ENCODE measurements at regions of chr4 and their contacts with region 1.

Region 1: GRCh38 chr4:108620101-108620932 is at the start of gene RPL34:
- DNase-seq: peak; percentile 95 to 97
- ATAC-seq: peak; percentile 99
- H3K4me3 ChIP-seq: peak within 1 kb of the TSS; percentile 75 to 87 (median 79)
- H3K27ac ChIP-seq: peak within 1 kb of the TSS; percentile 78 to 87 (median 83)
- H3K4me1 ChIP-seq: peaks cover 19 to 21% of the 10 kb centered on the region in 2 donors
- H3K27me3 ChIP-seq: no peaks in the 10 kb centered on the region
- CTCF ChIP-seq: no peak
- POLR2A ChIP-seq: peak; percentile 93 to 94
- total RNA-seq, gene RPL34: 419 to 608 (median 540) TPM

Region 2: DNA sequence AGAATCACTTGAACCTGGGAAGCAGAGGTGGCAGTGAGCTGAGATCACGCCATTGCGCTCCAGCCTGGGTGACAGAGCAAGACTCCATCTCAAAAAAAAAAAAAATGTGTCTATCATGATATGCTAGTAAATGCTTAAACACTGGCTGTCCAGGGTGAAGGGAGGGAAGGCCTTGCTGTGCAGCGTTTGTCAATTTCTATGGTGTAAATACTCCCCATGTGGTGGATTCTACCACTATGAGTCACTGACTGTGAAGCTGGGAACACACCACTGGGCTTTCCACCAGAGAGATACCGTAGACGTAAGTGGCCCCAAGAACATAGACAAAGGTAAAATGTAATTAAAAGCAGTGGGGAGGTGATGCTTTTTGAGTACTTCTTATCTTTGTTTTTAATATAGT is 400.3 kb before region 1 on chr4:
- in situ Hi-C with region 1: no loop called
- intact Hi-C with region 1: no loop called
- DNase-seq: no peak
- ATAC-seq: no peak
- H3K4me3 ChIP-seq: no peak overlapping the region
- H3K27ac ChIP-seq: no peak overlapping the region
- H3K4me1 ChIP-seq: no peaks in the 10 kb centered on the region
- H3K27me3 ChIP-seq: no peaks in the 10 kb centered on the region
- CTCF ChIP-seq: no peak
- POLR2A ChIP-seq: no peak

Region 3: DNA sequence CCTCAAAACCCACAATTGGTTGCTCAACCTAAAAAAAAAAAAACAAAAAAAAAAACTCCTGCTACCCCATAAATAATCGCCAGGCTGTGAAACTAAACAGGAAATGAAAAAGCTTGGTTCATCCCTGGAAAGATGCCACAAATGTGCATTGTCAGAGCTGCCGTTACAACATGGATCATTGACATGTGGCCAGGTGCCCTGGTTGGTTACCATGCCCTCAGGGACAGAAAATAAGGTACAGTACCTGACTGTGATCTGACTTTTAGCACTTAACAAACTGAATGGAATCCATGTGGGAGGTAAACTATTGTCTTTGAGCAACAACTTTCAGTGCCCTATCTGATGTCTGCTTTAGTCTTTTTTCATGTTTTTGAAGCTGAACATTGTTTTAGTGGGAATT is 118.0 kb before region 1 on chr4:
- in situ Hi-C with region 1: no loop called
- intact Hi-C with region 1: no loop called
- DNase-seq: no peak
- ATAC-seq: no peak
- H3K4me3 ChIP-seq: no peak overlapping the region
- H3K27ac ChIP-seq: no peak overlapping the region
- H3K4me1 ChIP-seq: no peaks in the 10 kb centered on the region
- H3K27me3 ChIP-seq: no peaks in the 10 kb centered on the region
- CTCF ChIP-seq: no peak
- POLR2A ChIP-seq: no peak

Region 4: DNA sequence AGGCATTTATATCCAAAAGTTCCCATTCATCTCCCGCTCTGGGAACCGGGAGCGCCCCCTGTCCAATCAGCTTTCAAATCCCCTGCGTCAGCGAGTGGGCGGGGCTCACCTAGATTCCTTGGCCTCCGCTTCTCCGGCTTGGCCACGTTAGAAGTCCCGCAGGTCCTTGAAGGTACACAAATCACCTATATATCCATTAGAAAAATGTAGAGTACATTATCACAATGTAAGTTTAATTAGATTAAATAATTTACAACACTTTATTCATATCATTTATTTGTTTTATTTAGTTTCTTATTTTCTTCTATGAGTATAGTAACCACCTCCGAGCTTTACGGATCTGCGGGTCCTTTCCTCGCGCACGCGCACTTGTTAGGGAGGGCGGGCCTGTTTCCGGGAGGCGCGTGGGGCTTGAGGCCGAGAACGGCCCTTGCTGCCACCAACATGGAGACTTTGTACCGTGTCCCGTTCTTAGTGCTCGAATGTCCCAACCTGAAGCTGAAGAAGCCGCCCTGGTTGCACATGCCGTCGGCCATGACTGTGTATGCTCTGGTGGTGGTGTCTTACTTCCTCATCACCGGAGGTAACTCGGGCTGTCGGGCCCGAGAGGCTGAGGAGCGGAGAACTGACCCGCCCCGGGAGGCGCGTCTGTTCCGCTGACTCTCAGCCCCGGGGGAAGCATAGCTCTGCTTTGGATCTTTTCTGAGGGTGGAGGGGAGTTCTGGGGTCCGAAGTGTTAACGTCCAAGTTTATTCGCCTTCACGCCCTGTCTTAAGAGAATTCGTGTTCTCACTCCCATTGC is 30.1 kb after region 1 on chr4 and contains the start of gene OSTC:
- in situ Hi-C with region 1: no loop called
- intact Hi-C with region 1: loop called (anchors 1 kb)
- DNase-seq: peak; percentile 87 to 91
- ATAC-seq: peak; percentile 99
- H3K4me3 ChIP-seq: peak within 1 kb of the TSS; percentile 73 to 95 (median 90)
- H3K27ac ChIP-seq: peak within 1 kb of the TSS; percentile 87 to 90 (median 88)
- H3K4me1 ChIP-seq: peaks cover 14 to 21% of the 10 kb centered on the region in 2 donors
- H3K27me3 ChIP-seq: no peaks in the 10 kb centered on the region
- CTCF ChIP-seq: peak in 1 of 5 experiments; percentile 20
- POLR2A ChIP-seq: peak; percentile 15 to 61
- total RNA-seq, gene OSTC: 15.5 to 25.0 (median 23.2) TPM

Region 5: DNA sequence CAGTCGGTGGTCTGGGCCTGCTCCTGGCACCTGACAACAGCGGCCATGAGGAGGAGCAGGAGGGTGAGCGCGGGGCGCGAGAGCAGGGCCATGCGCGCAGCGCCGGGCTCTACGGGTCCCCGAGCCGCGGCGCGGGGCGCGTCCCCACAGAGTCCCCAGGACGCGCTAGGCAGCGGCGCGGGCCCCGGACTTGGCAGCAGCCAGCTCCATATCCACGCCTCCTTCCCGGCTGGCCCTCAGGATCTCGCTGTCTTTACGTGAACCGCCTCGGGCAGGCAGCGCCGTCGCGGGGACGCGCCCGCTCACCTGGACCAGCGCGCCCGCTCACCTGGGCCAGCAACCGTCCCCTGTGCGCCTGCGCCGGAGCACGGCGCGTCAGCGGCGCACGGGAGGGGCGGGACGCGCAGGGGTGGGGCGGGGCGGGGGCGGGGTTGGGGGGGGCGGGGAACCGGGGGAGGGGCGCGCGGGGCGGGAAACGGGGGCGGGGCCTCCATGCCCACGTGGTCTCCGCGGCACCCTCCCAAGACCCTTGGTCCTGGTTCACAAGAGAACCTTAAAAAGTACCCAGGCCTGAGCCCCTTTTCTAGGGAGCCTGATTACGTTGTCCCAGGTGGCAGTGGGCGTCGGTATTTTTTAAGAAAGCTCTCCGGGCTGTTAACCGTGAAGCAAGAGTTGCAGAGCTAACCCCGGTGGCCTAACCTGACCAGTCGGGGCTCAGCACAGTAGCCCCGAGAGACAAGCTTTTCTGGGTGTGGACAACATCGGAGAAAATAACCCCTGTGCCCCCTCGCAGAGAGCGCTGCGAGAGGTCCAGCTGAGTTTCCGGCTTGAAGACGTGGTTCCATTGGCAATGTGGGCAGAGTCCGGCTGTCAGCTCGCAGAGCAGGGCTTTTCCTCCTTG is 1109.7 kb after region 1 on chr4 and contains the start of gene PLA2G12A:
- in situ Hi-C with region 1: no loop called
- intact Hi-C with region 1: loop called (anchors 10 kb)
- DNase-seq: peak; percentile 54 to 61
- ATAC-seq: peak; percentile 77 to 85
- H3K4me3 ChIP-seq: peak within 1 kb of the TSS; percentile 86 to 99 (median 94)
- H3K27ac ChIP-seq: peak within 1 kb of the TSS; percentile 91 to 96 (median 95)
- H3K4me1 ChIP-seq: peaks cover 14 to 19% of the 10 kb centered on the region in 2 donors
- H3K27me3 ChIP-seq: no peaks in the 10 kb centered on the region
- CTCF ChIP-seq: no peak
- POLR2A ChIP-seq: peak; percentile 71 to 72
- total RNA-seq, gene PLA2G12A: 26.7 to 83.1 (median 57.6) TPM

Region 6: DNA sequence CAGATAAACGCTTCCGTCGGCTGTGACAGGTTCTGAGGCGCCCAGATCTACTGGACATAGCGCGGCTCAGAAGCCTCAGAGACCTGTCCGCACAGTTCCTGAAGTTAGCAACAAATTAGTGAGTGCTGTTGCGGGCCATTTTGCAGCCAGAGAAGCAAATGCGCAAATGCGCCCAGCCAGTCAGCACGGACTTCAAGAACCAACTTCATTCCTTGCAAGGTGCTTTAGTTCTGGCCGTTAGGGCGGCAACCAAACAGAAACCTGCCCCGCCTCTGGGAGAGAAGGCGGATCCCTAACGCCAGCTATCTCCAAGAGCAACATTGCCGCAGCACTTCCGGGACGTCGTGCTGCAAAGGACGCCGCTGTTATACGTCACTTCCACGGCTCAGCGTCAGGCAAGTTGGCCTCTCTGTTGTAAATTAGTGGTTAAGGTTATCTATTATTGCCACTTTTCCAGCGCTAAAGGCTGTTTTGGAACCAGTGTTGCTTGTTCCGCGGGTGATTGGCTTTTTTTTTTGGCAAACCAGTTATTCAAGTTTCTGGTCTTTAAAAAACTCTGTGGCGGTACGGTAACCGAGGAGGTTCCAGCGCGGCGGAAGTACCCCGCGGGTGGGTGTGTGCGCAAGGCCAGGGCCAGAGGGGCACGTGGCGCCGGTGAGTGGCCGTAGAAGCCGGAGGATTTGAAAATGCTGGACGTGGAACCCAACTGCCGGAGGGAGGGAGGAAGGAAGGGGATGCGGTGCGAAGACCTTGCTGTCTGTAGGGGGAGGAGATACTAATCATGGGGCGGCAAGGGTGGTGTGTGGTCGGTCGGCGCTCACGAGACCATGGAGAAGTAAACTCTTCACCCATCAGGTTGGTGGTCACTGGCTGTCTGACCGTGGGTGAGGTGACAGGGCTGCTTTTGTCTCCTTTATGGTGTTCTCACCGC is 1195.1 kb after region 1 on chr4 and contains the start of gene GAR1:
- in situ Hi-C with region 1: no loop called
- intact Hi-C with region 1: loop called (anchors 1 kb)
- DNase-seq: peak; percentile 85 to 86
- ATAC-seq: peak; percentile 99 to 100
- H3K4me3 ChIP-seq: peak within 1 kb of the TSS; percentile 70 to 99 (median 88)
- H3K27ac ChIP-seq: peak within 1 kb of the TSS; percentile 82 to 90 (median 86)
- H3K4me1 ChIP-seq: peaks cover 14 to 22% of the 10 kb centered on the region in 2 donors
- H3K27me3 ChIP-seq: no peaks in the 10 kb centered on the region
- CTCF ChIP-seq: peak in 1 of 5 experiments; percentile 9
- POLR2A ChIP-seq: peak in 1 of 2 donors; percentile 18
- total RNA-seq, gene GAR1: 2.8 to 7.2 (median 3.5) TPM

Measured in gastrocnemius medialis (tissue), 4 donors.